WTC11 (cell line): ENCODE measurements at regions of chr9 and their contacts with region 1.

Region 1: GRCh38 chr9:95336281-95336680 is 18.8 kb upstream of the FANCC start:
- DNase-seq: peak; percentile 59
- ATAC-seq: peak; percentile 90
- H3K4me3 Mint-ChIP-seq: no peak overlapping the region
- H3K27ac Mint-ChIP-seq: no peak overlapping the region
- H3K4me1 Mint-ChIP-seq: no peaks in the 10 kb centered on the region
- H3K27me3 Mint-ChIP-seq: no peaks in the 10 kb centered on the region; the same call in 1 of the 2 replicates
- CTCF ChIP-seq: peak; percentile 77

Region 2: DNA sequence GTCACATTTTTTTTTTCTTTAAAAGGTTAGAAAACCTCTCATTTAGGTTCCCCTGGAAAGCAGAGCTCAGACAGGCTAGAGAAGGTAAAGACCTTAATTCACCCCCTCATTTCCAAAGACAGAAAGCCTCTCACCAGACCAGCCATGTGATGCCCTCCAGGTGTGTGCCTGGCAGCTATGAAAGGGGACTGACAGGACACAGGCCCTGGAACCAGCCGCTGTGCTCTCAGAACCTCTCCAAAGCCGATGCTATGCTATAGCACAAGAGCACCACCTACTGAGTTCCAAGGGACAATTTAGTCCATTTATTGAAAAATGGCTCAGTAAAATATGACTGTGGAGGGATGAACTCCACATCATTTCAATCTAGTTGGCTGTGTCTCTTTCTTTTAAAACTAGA is 67.6 kb before region 1 on chr9:
- CTCF ChIA-PET with region 1: interaction called, 10 read pairs
- POLR2A ChIA-PET with region 1: no interaction called
- DNase-seq: peak; percentile 32
- ATAC-seq: peak; percentile 75
- H3K4me3 Mint-ChIP-seq: no peak overlapping the region
- H3K27ac Mint-ChIP-seq: no peak overlapping the region
- H3K4me1 Mint-ChIP-seq: peaks cover 32% of the 10 kb centered on the region
- H3K27me3 Mint-ChIP-seq: no peaks in the 10 kb centered on the region
- CTCF ChIP-seq: no peak

Region 3: GRCh38 chr9:95305770-95306492 is 30.4 kb before region 1 on chr9:
- CTCF ChIA-PET with region 1: interaction called, 10 read pairs
- POLR2A ChIA-PET with region 1: no interaction called
- DNase-seq: no peak
- ATAC-seq: no peak
- H3K4me3 Mint-ChIP-seq: no peak overlapping the region
- H3K27ac Mint-ChIP-seq: no peak overlapping the region
- H3K4me1 Mint-ChIP-seq: peaks cover 17% of the 10 kb centered on the region
- H3K27me3 Mint-ChIP-seq: no peaks in the 10 kb centered on the region
- CTCF ChIP-seq: no peak

Region 4: DNA sequence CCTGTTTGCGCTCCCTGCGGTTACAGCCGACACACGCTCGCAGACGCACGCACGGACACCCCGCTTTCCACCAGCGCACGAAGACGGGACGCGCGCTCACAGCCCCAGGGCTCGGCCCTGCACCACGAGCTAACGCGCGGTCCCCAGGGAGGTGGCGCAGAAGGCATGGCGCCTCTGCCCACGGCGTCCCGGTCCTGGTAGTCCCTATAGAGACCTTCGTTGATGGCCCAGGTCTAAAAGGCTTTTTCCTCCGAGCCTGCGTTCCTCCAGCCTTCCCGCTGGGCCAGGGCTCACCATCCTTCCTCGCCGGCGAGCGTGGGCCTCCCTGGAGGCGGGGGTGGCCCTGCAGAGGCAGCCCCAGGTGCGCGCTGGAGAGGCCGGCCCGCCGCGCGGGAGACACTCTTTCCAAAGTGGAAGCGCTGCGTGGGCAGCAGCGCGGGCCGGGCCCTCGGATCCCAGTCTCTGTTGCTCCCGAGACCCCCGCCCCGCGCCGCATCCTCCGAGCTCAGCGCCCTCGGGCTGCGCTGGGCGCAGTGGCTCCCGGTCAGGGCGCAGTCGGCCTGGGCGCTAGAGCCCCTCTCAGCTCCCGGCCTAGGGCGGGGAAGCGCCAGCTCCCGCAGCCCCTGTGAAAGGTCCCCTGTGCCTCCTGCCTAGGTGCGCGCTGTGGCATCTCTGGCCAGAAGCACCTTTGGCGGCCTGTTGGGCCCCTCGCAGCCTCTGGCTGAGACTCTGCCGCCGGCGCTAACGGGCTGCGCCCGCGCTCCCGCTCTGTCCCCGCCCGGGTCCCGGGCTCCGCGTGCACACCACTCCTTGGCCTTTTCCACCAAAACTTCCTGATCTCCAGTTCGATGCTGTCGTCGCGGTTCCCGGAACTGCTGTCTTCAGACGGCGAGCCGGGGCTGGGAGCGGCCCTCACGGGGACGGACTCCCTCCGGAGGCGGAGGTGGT is 13.1 kb after region 1 on chr9:
- CTCF ChIA-PET with region 1: interaction called, 33 read pairs
- POLR2A ChIA-PET with region 1: no interaction called
- DNase-seq: peak; percentile 67
- ATAC-seq: peak; percentile 79
- H3K4me3 Mint-ChIP-seq: peak overlapping the region; percentile 81
- H3K27ac Mint-ChIP-seq: no peak overlapping the region
- H3K4me1 Mint-ChIP-seq: no peaks in the 10 kb centered on the region
- H3K27me3 Mint-ChIP-seq: peaks cover 47% of the 10 kb centered on the region
- CTCF ChIP-seq: no peak

Region 5: DNA sequence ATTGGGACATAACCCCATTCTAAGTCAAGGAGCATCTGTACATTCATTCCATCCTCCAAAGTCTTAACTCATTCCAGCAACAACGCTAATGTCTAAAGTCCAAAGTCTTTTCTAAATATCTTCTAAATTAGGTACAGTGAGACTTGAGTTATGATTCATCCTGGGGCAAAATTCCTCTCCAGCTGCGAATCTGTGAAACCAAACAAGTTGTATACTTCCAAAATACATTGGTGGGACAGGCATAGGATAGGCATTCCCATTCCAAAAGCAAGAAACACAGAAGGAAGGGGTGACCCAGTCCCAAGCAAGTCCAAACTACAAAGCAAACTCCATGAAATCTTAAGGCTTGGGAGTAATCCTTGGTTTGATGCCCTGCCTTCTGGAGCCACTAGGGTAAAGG is 78.9 kb after region 1 on chr9:
- CTCF ChIA-PET with region 1: no interaction called
- POLR2A ChIA-PET with region 1: no interaction called
- DNase-seq: no peak
- ATAC-seq: no peak
- H3K4me3 Mint-ChIP-seq: no peak overlapping the region
- H3K27ac Mint-ChIP-seq: no peak overlapping the region
- H3K4me1 Mint-ChIP-seq: peaks cover 20% of the 10 kb centered on the region
- H3K27me3 Mint-ChIP-seq: no peaks in the 10 kb centered on the region
- CTCF ChIP-seq: no peak